ENCODE measurements at regions of chr13 and their contacts with region 1.

Region 1: DNA sequence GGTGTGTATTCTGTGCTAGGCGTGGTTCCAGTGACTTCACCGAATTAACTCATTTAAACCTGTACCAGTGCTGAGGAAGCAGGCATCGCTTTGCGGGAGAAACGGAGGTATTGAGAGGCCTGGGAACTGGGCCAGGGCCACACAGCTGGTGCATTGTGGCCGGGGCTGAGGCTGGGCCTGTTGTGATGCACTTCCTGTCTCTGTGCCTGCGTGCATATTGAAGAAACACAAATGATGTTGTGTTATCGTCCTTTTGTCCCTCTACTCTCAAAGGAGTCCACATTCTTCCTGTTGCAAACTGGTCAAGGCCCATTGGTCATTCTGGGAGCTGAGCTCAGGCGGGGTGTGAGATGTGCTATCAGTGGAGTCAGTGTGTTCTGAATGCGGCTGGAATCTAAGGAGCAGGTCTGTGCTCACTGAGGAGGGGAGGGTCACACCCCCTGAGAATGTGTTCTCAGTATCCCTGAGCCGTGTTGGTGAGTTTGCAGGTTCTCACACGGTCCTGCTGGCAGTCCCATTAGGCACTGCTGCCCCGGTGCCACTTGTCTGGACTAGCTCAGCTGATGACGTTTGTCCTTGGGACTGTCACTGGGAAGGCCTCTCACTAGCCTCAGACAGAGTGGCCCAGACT is 62.1 kb downstream of the ARHGEF7 start:
- DNase-seq: peak; percentile 64 to 77
- ATAC-seq: peak; percentile 77 to 90 (median 84)
- H3K4me3 ChIP-seq: peak overlapping the region in 1 of 10 donors; percentile 2
- H3K27ac ChIP-seq: peak overlapping the region; percentile 64 to 95 (median 87)
- H3K4me1 ChIP-seq: peaks cover 12 to 68% (median 58%) of the 10 kb centered on the region in 9 donors
- H3K27me3 ChIP-seq: no peaks in the 10 kb centered on the region
- CTCF ChIP-seq: no peak

Region 2: GRCh38 chr13:111210544-111211469 is 33.6 kb after region 1 on chr13:
- intact Hi-C with region 1: loop called in 2 of 10 experiments (anchors 5 kb)
- DNase-seq: peak in 1 of 2 donors; percentile 51
- ATAC-seq: peak; percentile 41 to 80 (median 52)
- H3K4me3 ChIP-seq: peak overlapping the region in 3 of 10 donors; percentile 3 to 9 (median 7)
- H3K27ac ChIP-seq: peak overlapping the region in 4 of 10 donors; percentile 6 to 33 (median 17)
- H3K4me1 ChIP-seq: peaks cover 4 to 97% (median 74%) of the 10 kb centered on the region in 9 donors
- H3K27me3 ChIP-seq: no peaks in the 10 kb centered on the region
- CTCF ChIP-seq: no peak

Measured in heart right ventricle (tissue), 16 donors.